HEK293 (cell line): ENCODE measurements at regions of chr1 and their contacts with region 1.

Region 1: GRCh38 chr1:154198756-154199562 is 7.1 kb upstream of the TPM3 start:
- H3K4me3 ChIP-seq: no peak overlapping the region
- H3K27ac ChIP-seq: no peak overlapping the region
- H3K4me1 ChIP-seq: peaks cover 6% of the 10 kb centered on the region
- CTCF ChIP-seq: no peak

Region 2: DNA sequence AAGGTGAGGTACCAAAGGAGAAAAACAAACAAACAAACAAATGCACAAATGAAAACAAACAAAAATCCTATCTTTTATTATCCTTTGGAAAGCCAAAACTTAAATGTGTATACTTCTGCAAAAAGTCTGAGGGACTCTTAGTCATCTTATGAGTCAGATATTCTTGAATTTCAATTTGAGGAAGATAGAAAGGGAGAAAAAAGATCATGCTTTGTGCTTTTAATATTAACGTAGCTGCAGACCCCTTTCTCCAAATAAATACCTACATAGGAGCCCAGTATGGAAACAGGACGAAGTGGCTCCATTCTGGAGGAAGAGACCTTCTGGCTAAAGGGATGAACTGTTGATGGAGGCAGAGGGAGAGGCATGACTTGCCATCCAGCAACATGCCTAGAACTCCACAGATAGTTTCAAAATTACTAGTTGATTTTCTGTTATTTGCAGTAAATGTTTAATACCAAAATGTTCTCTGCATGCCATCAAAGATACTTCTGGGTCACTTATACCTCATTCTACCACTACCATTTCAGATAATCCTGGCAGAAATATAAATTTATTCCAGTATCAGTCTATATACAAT is 69.5 kb before region 1 on chr1:
- CTCF ChIA-PET with region 1: no interaction called
- POLR2A ChIA-PET with region 1: no interaction called
- H3K4me3 ChIP-seq: no peak overlapping the region
- H3K27ac ChIP-seq: no peak overlapping the region
- H3K4me1 ChIP-seq: no peaks in the 10 kb centered on the region
- CTCF ChIP-seq: no peak

Region 3: GRCh38 chr1:154220071-154220969 is 21.4 kb after region 1 on chr1 and contains the start of gene UBAP2L:
- CTCF ChIA-PET with region 1: interaction called, 13 read pairs
- POLR2A ChIA-PET with region 1: interaction called, 9 read pairs
- H3K4me3 ChIP-seq: peak within 1 kb of the TSS; percentile 87
- H3K27ac ChIP-seq: peak within 1 kb of the TSS; percentile 96
- H3K4me1 ChIP-seq: no peaks in the 10 kb centered on the region
- CTCF ChIP-seq: peak; percentile 21; the same call in 1 of the 2 replicates

Region 4: DNA sequence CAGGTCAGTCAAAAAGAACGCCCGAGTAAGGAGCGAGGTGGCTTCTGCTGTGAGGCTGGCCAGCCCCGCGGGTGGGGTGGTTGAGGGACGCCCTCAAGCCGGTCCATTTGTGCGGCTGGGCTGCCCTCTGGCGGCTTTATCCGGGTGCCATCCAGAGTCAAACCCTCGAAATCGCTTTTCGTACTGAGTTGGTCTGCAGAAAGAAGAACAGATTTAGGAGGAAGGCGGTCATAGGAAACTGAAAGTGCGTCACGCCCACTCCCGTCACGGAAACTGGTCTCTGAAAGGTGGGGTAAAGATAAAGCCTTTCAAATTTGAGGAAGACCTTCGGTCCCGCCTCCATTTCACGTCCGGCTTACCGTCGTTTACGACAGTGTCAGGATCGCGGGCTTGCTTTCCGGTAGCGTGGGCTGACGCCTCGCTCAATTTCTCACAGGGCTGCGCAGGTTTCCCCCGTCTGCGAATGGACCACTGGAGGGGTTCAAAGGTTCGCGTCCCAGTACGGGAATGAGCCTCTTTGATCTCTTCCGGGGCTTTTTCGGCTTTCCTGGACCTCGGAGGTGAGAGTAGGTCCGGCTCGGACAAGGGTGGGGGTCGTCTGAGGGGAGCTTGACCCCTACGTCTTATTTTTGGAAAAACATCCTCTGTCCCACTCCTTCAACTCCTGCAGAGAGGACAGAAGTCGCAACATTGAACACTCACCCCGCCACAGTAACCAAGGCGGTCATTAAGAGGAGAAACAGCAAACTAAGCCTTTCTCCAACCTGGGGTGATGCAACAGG is 73.4 kb after region 1 on chr1 and contains the start of gene HAX1:
- CTCF ChIA-PET with region 1: interaction called, 12 read pairs
- POLR2A ChIA-PET with region 1: interaction called, 3 read pairs
- H3K4me3 ChIP-seq: peak within 1 kb of the TSS; percentile 80
- H3K27ac ChIP-seq: peak within 1 kb of the TSS; percentile 62; the same call in 1 of the 2 replicates
- H3K4me1 ChIP-seq: no peaks in the 10 kb centered on the region
- CTCF ChIP-seq: peak; percentile 93